A673 (cell line): ENCODE measurements at regions of chr2 and their contacts with region 1.

Region 1: DNA sequence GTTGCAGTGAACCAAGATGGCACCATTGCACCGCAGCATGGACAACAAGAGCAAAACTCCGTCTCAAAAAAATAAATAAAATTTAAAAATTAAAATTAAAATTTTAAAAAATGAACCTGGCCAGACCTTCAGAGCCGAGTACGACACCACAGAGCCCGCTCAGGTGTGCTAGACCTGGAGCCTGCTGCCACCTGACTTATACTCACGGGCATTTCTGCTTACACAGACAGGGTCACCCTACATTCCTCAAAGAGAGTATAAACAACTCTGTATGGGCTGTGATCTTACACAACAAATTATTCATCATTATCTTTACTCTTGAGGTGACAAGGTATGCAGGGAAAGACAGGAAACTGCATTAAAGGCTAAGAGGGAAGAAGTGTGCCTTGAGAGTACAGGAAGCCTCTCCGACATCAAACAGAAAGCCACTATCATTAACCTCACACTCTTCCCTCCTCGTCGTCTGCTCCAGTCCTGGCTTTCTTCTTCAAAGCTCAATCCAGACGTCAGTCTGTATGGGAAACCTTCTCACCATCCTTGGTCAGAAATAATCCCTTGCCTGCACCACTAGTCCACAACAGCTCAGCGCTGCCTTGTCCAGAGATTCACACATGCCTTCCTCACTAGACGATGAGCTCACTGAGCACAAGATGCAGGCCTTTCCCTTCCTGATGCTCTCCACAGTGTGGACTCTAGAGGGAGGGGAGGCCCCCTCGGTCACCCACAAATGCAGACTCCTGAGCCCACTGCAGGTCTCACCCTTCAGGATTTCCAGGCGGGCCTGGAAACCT is 56.2 kb downstream of the UXS1 start:
- DNase-seq: no peak
- H3K4me3 ChIP-seq: no peak overlapping the region
- H3K27ac ChIP-seq: no peak overlapping the region
- H3K4me1 ChIP-seq: no peaks in the 10 kb centered on the region
- H3K27me3 ChIP-seq: no peaks in the 10 kb centered on the region
- CTCF ChIP-seq: no peak

Region 2: GRCh38 chr2:105904938-105905337 is 233.0 kb before region 1 on chr2:
- CTCF ChIA-PET with region 1: no interaction called
- POLR2A ChIA-PET with region 1: no interaction called
- intact Hi-C with region 1: no loop called
- DNase-seq: no peak
- H3K4me3 ChIP-seq: no peak overlapping the region
- H3K27ac ChIP-seq: no peak overlapping the region
- H3K4me1 ChIP-seq: no peaks in the 10 kb centered on the region
- H3K27me3 ChIP-seq: no peaks in the 10 kb centered on the region
- CTCF ChIP-seq: no peak

Region 3: GRCh38 chr2:106192752-106193689 is 55.1 kb after region 1 on chr2:
- CTCF ChIA-PET with region 1: no interaction called
- POLR2A ChIA-PET with region 1: interaction called, 10 read pairs
- intact Hi-C with region 1: no loop called
- DNase-seq: peak; percentile 72
- H3K4me3 ChIP-seq: peak overlapping the region; percentile 96
- H3K27ac ChIP-seq: peak overlapping the region; percentile 85
- H3K4me1 ChIP-seq: no peaks in the 10 kb centered on the region
- H3K27me3 ChIP-seq: no peaks in the 10 kb centered on the region
- CTCF ChIP-seq: no peak

Region 4: GRCh38 chr2:107337209-107337898 is 1199.4 kb after region 1 on chr2:
- CTCF ChIA-PET with region 1: no interaction called
- POLR2A ChIA-PET with region 1: no interaction called
- intact Hi-C with region 1: no loop called
- DNase-seq: no peak
- H3K4me3 ChIP-seq: no peak overlapping the region
- H3K27ac ChIP-seq: no peak overlapping the region
- H3K4me1 ChIP-seq: no peaks in the 10 kb centered on the region
- H3K27me3 ChIP-seq: no peaks in the 10 kb centered on the region
- CTCF ChIP-seq: no peak